WTC11 (cell line): ENCODE measurements at regions of chr4 and their contacts with region 1.

Region 1: GRCh38 chr4:47704693-47705325 is 133.1 kb downstream of the CORIN start:
- DNase-seq: peak; percentile 60
- ATAC-seq: peak; percentile 97
- H3K4me3 Mint-ChIP-seq: no peak overlapping the region
- H3K27ac Mint-ChIP-seq: no peak overlapping the region
- H3K4me1 Mint-ChIP-seq: peaks cover 19% of the 10 kb centered on the region
- H3K27me3 Mint-ChIP-seq: no peaks in the 10 kb centered on the region
- CTCF ChIP-seq: no peak

Region 2: DNA sequence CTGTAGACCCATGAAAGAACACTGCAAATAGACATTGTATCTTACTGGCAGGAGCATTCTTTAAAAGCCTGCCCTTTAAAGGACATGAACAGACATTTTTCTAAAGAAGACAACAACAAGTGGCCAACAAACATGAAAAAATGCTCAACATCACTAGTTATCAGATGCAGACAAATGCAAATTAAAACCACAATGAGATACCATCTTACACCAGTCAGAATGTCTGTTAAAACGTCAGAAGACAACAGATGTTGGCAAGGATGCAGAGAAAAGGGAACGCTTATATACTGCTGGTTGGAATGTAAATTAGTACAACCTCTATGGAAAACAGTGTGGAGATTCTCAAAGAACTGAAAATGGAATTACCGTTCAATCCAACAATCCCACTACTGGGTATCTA is 142.5 kb before region 1 on chr4:
- CTCF ChIA-PET with region 1: no interaction called
- POLR2A ChIA-PET with region 1: no interaction called
- DNase-seq: no peak
- ATAC-seq: no peak
- H3K4me3 Mint-ChIP-seq: no peak overlapping the region
- H3K27ac Mint-ChIP-seq: no peak overlapping the region
- H3K4me1 Mint-ChIP-seq: no peaks in the 10 kb centered on the region
- H3K27me3 Mint-ChIP-seq: no peaks in the 10 kb centered on the region
- CTCF ChIP-seq: no peak

Region 3: GRCh38 chr4:47715716-47716416 is 11.1 kb after region 1 on chr4:
- CTCF ChIA-PET with region 1: interaction called, 13 read pairs
- POLR2A ChIA-PET with region 1: no interaction called
- DNase-seq: no peak
- ATAC-seq: no peak
- H3K4me3 Mint-ChIP-seq: no peak overlapping the region
- H3K27ac Mint-ChIP-seq: no peak overlapping the region
- H3K4me1 Mint-ChIP-seq: peaks cover 36% of the 10 kb centered on the region
- H3K27me3 Mint-ChIP-seq: peaks cover 2% of the 10 kb centered on the region; the same call in 1 of the 2 replicates
- CTCF ChIP-seq: no peak